Tibial artery (tissue), 4 donors: ENCODE measurements at regions of chr16 and their contacts with region 1.

Region 1: DNA sequence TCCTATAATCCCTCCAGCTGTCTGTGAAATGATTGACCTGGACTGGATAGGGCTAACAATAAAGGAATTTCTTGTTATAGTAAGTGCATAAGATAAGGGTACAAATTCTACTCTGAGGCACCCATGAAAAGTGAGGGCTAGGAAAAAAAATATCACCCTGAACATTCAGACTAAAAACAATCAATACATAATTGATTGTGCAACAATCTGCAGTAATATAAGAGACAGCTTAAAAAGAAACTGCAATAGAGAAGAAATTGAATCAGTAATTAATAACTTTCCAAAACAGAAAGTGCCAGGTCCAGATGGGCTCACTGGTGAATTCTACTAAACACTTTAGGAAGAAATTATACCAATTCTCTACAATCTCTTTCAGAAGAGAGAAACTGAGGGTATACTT is 44.2 kb upstream of the CREBBP start:
- DNase-seq: no peak
- H3K4me3 ChIP-seq: no peak overlapping the region
- H3K27ac ChIP-seq: no peak overlapping the region
- H3K4me1 ChIP-seq: no peaks in the 10 kb centered on the region
- H3K27me3 ChIP-seq: no peaks in the 10 kb centered on the region
- CTCF ChIP-seq: no peak

Region 2: DNA sequence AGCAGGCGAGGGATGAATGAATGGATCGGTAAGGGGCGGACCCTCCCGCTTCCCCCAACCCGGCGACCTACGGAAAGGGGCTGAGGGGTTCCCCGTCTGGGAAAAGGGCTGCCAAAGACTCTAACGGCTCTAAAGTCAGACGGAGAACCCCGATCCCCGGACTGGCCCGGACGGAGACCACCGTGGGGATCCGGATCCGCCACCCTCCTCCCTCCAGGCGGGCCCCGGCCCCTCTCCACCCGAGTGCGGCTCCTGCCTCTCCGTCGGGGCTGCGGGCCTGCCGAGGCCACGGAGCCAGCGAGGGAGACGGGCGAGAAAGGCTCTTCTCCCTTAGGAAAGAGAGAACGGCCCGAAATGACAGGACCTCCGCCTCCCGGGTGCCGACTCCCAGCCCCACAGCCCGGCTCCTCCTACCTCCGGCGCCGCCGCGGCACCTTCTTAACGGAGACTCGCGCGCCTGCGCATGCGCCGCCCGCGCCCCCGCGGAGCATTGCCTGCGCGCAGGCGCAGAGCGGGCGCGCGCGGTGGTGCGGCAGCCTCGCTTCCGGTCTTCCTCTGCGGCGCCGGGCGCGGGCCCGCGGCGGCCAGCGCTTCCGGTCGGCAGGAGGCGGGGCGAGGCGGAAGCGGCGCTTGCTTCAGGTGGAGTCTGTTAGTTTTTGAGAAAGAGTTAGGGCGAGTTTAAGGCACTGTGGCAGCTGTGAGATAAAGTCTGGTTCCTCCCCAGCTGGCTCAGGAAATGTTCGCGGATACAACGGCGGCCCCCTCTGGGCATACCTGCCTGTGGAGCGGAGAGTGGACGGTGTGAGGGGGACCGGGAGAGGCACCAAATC is 313.4 kb before region 1 on chr16 and contains the start of gene SLX4:
- intact Hi-C with region 1: no loop called
- DNase-seq: peak; percentile 85 to 94
- H3K4me3 ChIP-seq: peak within 1 kb of the TSS; percentile 93
- H3K27ac ChIP-seq: peak within 1 kb of the TSS; percentile 81 to 90
- H3K4me1 ChIP-seq: peaks cover 0 to 27% (median 17%) of the 10 kb centered on the region in 4 donors
- H3K27me3 ChIP-seq: no peaks in the 10 kb centered on the region
- CTCF ChIP-seq: peak in 1 of 2 experiments; percentile 24

Region 3: DNA sequence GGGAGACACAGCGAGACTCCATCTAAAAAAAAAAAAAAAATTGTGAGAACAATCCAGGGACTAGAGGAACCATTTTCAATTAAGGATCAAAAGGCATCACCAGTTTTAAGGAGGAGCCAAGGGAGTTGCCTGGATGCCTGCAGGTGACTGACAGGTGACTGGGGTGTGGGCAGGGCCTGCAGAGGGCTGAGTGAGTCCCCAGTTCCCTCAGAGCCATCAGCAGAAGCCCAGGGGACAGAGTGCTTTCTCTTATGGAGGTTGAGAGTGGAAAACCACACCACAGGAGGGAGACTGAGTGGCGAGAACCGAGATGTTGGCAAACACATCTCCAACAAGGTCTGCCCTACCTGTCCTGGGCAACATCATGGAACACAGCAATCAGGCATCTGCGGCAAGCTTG is 17.2 kb before region 1 on chr16:
- intact Hi-C with region 1: no loop called
- DNase-seq: no peak
- H3K4me3 ChIP-seq: no peak overlapping the region
- H3K27ac ChIP-seq: no peak overlapping the region
- H3K4me1 ChIP-seq: no peaks in the 10 kb centered on the region
- H3K27me3 ChIP-seq: no peaks in the 10 kb centered on the region
- CTCF ChIP-seq: no peak

Region 4: DNA sequence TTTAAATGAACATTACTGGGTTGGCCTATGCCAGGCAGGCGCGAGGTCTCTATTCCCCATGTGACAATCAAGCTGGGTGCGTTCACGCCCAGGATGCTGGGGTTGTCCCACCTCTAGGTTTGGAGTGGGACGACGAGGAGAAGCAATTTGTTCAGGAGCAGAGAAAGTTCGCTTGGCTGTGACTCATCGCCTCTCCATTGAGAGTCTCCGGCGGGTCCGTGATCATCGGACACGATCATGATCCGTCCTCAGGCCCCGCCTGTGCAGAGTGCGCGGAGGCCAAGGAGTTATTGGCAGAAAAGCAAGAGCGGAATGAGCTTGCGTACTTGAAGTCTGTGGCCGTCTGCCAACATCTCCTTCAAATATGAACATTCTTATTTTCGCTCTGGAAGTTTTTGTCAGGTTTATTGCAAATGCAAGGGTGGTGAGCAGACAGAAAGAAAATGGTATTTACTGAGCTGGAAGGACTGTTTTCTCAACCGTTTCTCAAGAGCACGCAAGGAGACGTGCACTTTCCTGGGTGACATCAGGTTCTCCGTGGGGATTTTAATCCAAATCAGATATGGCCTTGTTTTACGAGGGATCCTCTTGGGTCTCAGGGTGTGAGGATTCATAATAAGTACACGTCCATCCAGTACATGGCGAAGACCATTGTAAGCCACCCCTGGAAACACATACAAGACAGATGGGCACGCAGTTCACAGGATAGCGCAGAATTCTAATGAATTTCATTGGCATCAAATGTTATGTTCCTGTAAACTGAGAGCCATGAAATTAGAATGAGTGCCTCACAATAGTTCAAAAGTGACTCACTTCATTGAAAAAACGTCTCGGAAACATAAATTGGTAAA is 25.8 kb after region 1 on chr16:
- intact Hi-C with region 1: no loop called
- DNase-seq: peak; percentile 92 to 95
- H3K4me3 ChIP-seq: peak overlapping the region; percentile 36 to 38
- H3K27ac ChIP-seq: peak overlapping the region; percentile 90 to 91
- H3K4me1 ChIP-seq: peaks cover 0 to 65% (median 41%) of the 10 kb centered on the region in 4 donors
- H3K27me3 ChIP-seq: no peaks in the 10 kb centered on the region
- CTCF ChIP-seq: no peak

Region 5: DNA sequence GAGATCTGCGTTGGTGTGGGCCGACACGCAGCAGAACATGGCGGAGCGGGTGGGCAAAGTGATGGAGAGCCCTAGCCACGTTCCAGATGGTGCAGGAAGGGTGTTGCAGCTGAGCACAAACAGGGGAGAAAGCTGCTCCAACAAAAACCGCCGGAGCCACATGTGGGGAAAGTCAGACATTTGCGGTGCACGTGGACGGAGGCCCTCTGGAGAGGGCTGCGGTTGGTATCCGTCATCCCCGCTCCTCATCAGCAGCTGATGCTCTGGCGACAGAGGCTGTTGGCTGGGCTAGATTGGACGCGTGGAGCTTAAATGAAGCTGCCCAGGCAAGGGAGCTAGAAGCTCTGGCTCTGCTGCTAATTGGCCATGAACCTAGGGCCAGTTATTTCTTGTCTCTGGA is 235.0 kb after region 1 on chr16:
- intact Hi-C with region 1: loop called (anchors 5 kb)
- DNase-seq: no peak
- H3K4me3 ChIP-seq: no peak overlapping the region
- H3K27ac ChIP-seq: no peak overlapping the region
- H3K4me1 ChIP-seq: no peaks in the 10 kb centered on the region
- H3K27me3 ChIP-seq: no peaks in the 10 kb centered on the region
- CTCF ChIP-seq: no peak

Region 6: DNA sequence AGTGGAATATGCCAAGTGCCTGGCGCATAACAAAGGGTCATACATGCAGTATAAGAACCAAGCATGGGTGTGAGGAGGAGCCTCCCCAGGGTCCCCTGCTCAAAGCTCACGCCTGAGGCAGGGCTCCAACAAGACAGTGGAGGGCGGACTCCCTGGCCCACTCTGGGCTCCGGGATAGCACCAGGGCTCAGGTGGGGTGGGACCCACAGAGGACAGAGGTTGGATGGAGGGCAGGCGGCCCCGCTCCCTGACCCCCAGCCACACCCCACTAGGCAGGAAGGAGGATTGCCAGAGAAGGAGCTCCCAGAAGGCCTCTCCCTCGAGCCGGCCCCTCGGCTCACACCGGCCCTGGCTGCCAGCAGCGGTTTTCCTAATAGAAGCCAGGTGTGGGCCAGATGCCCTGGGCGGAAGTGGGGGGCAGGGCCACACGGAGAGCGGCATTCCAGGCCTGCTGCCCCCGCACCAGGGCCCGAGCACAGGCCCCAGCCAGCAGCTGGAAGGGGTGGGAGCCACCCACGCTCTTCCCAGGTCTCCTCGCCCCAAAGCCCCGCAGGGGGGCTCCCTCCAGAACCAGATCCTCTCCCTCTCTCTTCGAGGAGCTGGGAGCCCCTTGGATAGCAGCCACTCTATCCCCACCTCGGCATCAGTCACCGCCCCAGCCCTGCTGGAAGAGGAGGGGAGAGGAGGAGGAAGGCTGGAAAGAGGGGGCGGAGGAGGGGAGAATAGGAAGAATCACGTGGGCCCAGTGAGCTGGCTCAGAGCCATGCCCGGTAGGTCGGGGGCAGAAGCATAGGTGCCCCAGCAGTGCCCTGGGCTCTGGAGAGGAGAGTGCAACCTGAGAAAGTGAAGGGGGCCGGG is 467.8 kb after region 1 on chr16:
- intact Hi-C with region 1: no loop called
- DNase-seq: peak in 1 of 2 donors; percentile 78
- H3K4me3 ChIP-seq: no peak overlapping the region
- H3K27ac ChIP-seq: peak overlapping the region; percentile 86 to 93
- H3K4me1 ChIP-seq: peaks cover 0 to 61% (median 50%) of the 10 kb centered on the region in 4 donors
- H3K27me3 ChIP-seq: no peaks in the 10 kb centered on the region
- CTCF ChIP-seq: no peak